Activated CD4-positive, alpha-beta T cell treated with anti-CD3 and anti-CD28 coated beads for 36 hours (primary cell): ENCODE measurements at regions of chr3 and their contacts with region 1.

Region 1: DNA sequence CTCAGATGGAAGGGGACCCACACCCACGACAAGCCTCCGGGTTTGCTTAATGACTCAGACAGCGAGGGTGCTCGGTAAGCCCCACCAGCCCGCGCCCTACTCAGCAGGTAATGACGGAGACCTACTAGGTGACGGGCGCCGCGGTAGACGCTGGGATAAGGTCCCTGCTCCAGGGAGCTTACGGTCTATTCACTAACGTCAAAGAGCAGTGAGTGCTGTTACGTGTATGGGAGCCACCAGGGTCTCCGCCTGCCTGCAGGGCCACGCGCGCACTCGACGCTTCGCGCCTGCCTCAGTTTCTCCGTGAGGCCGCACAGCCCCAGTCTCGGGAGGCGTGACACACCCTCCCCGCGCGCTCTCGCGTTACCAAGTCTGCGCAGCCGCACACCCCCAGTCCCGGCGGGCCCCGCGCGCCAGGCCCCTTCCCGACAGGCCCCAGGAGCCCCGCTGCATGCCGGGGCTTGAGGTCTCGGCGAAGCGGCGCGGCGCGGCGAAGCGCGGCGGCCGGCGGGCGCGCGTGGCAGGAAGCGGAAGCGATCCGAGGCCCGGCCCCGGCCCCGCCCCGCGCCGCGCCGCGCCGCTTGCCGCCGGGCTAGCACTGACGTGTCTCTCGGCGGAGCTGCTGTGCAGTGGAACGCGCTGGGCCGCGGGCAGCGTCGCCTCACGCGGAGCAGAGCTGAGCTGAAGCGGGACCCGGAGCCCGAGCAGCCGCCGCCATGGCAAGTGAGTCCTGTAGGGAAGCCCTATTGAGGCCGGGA is at the start of gene SEC61A1:
- DNase-seq: peak; percentile 98
- ATAC-seq: peak; percentile 96
- H3K4me3 Mint-ChIP-seq: peak within 1 kb of the TSS; percentile 90
- H3K27ac Mint-ChIP-seq: peak within 1 kb of the TSS; percentile 98
- H3K4me1 Mint-ChIP-seq: peaks cover 34% of the 10 kb centered on the region
- H3K27me3 Mint-ChIP-seq: no peaks in the 10 kb centered on the region
- total RNA-seq, gene SEC61A1: 113 to 123 TPM

Region 2: GRCh38 chr3:127501177-127501576 is 550.8 kb before region 1 on chr3:
- CTCF ChIA-PET with region 1: no interaction called
- POLR2A ChIA-PET with region 1: no interaction called
- intact Hi-C with region 1: no loop called
- DNase-seq: no peak
- ATAC-seq: no peak
- H3K4me3 Mint-ChIP-seq: no peak overlapping the region
- H3K27ac Mint-ChIP-seq: no peak overlapping the region
- H3K4me1 Mint-ChIP-seq: no peaks in the 10 kb centered on the region
- H3K27me3 Mint-ChIP-seq: peaks cover 24% of the 10 kb centered on the region

Region 3: GRCh38 chr3:127598841-127599570 is 453.0 kb before region 1 on chr3:
- CTCF ChIA-PET with region 1: no interaction called
- POLR2A ChIA-PET with region 1: no interaction called
- intact Hi-C with region 1: loop called (anchors 1 to 10 kb)
- DNase-seq: no peak
- ATAC-seq: no peak
- H3K4me3 Mint-ChIP-seq: peak overlapping the region; percentile 80
- H3K27ac Mint-ChIP-seq: peak overlapping the region; percentile 96
- H3K4me1 Mint-ChIP-seq: peaks cover 41% of the 10 kb centered on the region
- H3K27me3 Mint-ChIP-seq: no peaks in the 10 kb centered on the region

Region 4: DNA sequence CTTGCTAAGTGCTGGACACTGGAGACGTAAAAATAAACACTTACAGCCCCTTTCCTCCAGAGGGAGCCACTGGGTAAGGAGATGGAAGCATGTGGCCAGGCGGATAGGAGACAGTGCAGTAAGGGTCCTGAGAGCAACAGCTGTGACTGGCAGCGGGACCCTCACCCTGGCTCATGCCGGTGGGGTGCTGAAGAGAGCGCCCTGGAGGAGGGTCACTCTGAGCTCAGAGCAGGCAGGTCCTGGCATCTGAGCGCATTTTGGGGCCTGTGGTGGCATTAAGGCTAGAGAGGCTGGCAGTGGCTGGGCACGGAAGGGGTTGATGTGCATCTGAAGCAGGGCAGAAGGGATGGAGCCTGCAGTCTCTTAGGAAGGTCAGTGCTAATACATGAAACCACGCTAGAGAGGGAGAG is 16.2 kb after region 1 on chr3:
- CTCF ChIA-PET with region 1: interaction called, 12 read pairs
- POLR2A ChIA-PET with region 1: interaction called, 3 read pairs
- intact Hi-C with region 1: no loop called
- DNase-seq: peak; percentile 50
- ATAC-seq: peak; percentile 76
- H3K4me3 Mint-ChIP-seq: no peak overlapping the region
- H3K27ac Mint-ChIP-seq: peak overlapping the region; percentile 33
- H3K4me1 Mint-ChIP-seq: no peaks in the 10 kb centered on the region
- H3K27me3 Mint-ChIP-seq: no peaks in the 10 kb centered on the region

Region 5: GRCh38 chr3:128123538-128124368 is 71.7 kb after region 1 on chr3 and contains the start of gene RUVBL1:
- CTCF ChIA-PET with region 1: no interaction called
- POLR2A ChIA-PET with region 1: no interaction called
- intact Hi-C with region 1: loop called in 1 of 2 experiments (anchors 1 kb)
- DNase-seq: peak; percentile 99
- ATAC-seq: peak; percentile 99
- H3K4me3 Mint-ChIP-seq: peak within 1 kb of the TSS; percentile 99
- H3K27ac Mint-ChIP-seq: peak within 1 kb of the TSS; percentile 96
- H3K4me1 Mint-ChIP-seq: peaks cover 30% of the 10 kb centered on the region
- H3K27me3 Mint-ChIP-seq: no peaks in the 10 kb centered on the region
- total RNA-seq, gene RUVBL1: 97.0 to 99.9 TPM

Region 6: DNA sequence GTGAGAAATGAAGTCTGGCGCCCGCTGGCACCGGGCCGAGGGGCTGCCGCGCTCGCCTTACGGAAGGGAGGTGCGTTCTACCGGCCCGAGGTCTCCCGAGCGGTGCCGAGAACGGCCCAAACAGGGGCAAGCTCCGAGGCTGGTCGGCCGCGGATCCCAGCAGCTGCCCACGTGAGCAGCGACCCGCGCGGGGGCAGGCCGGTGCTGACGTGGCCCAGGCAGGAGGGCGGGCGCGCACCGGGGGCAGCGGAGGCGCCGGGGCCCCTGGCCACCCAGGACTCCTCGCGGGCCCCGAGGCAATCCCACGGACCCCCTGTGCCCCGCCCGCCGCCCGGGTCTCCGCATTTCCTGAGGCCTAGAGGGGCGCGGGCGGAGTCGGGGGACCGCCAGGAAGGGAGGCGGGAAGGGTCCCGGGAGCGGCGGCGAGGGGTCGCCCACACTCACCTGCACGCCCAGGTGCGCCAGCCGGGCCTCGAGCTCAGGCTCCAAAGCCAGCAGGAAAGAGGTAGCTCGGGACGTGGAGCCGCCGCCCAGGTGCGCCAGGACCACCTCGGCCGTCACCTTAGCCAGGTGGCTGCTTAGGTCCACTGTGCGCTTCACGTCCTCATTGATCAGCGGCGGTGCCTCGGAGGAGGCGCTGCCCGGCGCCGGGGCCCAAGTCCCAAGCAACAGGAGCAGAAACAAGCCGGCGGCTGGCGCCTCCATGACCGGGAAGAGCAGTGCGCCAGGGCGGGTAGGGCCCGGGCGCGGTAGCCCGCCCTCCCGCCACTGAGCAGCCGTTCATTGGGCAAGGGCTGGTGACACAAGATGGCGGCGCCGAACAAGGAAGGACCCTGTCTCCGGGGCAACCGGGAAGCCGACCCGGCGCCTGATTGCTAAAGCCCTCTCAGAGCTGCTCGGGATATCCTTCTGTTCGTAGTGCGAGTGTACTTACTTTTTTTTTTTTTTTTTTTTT is 598.4 kb after region 1 on chr3 and contains the start of gene RPN1:
- CTCF ChIA-PET with region 1: no interaction called
- POLR2A ChIA-PET with region 1: no interaction called
- intact Hi-C with region 1: loop called in 1 of 2 experiments (anchors 1 kb)
- DNase-seq: peak; percentile 97
- ATAC-seq: peak; percentile 97
- H3K4me3 Mint-ChIP-seq: peak within 1 kb of the TSS; percentile 81
- H3K27ac Mint-ChIP-seq: peak within 1 kb of the TSS; percentile 85
- H3K4me1 Mint-ChIP-seq: peaks cover 39% of the 10 kb centered on the region
- H3K27me3 Mint-ChIP-seq: no peaks in the 10 kb centered on the region
- total RNA-seq, gene RPN1: 138 to 153 TPM

Region 7: DNA sequence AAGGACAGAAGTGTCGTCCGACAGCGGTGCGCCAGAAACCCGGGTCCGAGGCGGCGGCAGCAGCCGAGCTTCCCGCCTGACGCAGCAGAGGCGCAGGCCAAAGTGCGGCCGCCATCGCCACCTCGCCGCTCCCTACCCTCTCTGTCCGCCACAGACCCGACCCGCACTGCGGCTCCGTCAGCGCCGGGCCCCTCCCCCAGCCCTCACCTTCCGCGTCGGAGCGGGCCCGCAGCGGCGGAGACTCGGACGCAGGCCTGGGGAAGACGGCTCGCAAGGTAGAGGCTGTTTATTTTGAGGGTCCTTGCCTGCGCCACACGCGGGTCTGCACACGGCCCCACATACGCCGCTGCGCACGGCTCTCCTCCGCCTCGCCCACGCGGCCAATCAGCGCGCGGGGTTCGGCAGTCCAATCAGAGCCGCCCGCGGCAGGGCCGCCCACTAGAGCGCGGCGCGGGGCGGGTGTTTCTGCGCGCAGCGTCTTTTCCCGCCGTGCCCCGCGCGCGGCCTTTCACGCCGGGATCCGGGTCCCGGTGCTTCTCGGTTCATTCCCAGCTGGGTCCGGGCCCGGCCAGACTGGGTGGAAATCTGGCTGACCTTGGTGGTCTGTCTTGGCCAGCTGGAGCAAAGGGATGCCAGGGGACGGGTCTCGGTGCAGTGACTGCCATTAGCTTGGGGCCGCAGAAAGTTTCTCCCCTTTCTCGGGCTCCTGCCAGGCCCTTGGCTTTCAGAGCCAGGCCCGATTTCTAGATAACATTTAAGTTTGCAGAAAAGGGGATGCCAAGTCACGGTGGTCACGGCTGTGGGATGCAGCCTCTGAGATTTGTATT is 1131.8 kb after region 1 on chr3 and contains the start of gene CNBP:
- CTCF ChIA-PET with region 1: no interaction called
- POLR2A ChIA-PET with region 1: no interaction called
- intact Hi-C with region 1: loop called in 1 of 2 experiments (anchors 10 kb)
- DNase-seq: peak; percentile 96
- ATAC-seq: peak; percentile 95
- H3K4me3 Mint-ChIP-seq: peak within 1 kb of the TSS; percentile 96
- H3K27ac Mint-ChIP-seq: peak within 1 kb of the TSS; percentile 99
- H3K4me1 Mint-ChIP-seq: peaks cover 29% of the 10 kb centered on the region
- H3K27me3 Mint-ChIP-seq: no peaks in the 10 kb centered on the region
- total RNA-seq, gene CNBP: 305 to 379 TPM